ENCODE measurements at regions of chr2 and their contacts with region 1.

Region 1: GRCh38 chr2:37573451-37574388 is 97.7 kb downstream of the CDC42EP3 start:
- DNase-seq: no peak
- H3K4me3 ChIP-seq: no peak overlapping the region
- CTCF ChIP-seq: no peak
- POLR2A ChIP-seq: no peak

Region 2: GRCh38 chr2:37623971-37624900 is 50.5 kb after region 1 on chr2:
- intact Hi-C with region 1: loop called (anchors 2 kb)
- DNase-seq: no peak
- H3K4me3 ChIP-seq: no peak overlapping the region
- CTCF ChIP-seq: no peak
- POLR2A ChIP-seq: no peak